ENCODE measurements at regions of chr19 and their contacts with region 1.

Region 1: DNA sequence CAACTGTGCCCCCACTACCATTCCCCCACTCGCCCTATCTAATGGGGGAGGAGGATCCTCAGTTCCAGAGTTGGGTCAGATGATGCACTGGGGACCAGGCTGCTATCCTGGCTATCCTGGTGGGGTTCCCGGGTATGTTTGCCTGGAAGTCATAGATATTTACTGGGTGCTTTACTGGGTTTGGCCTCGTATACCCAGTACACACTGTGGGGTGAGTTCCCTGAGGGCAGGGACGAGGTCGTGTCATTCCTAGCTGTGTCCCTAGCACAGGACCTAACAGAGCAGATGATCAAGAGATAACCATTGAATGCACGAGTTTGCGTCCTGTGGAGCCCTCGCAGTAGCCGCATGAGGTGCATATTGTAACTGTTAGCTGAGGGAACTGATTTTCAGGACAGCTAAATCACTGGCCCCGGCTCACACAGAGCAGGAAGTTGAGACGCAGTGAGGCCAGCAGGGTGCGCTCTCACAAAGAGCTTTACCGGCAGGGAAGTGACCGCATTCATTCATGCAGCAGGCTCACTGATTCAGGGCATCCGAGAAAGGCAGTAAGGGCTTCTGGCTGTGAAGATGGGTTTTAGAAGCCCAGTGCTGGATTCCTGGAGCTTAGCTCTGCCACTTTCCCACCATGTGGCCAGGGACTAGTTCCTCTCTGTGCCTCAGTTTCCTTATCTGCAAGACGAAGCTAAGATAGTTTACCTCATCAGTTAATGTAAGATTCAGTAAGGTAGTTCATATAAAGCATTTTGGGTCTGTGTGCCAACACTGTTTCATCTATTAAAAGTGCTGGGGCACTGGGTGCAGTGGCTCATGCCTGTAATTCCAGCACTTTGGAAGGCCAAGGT is 6.0 kb downstream of the RUVBL2 start:
- DNase-seq: peak; percentile 52
- H3K4me3 ChIP-seq: no peak overlapping the region
- H3K27ac ChIP-seq: no peak overlapping the region
- H3K4me1 ChIP-seq: peaks cover 3% of the 10 kb centered on the region
- H3K27me3 ChIP-seq: no peaks in the 10 kb centered on the region
- CTCF ChIP-seq: peak; percentile 79 to 84

Region 2: DNA sequence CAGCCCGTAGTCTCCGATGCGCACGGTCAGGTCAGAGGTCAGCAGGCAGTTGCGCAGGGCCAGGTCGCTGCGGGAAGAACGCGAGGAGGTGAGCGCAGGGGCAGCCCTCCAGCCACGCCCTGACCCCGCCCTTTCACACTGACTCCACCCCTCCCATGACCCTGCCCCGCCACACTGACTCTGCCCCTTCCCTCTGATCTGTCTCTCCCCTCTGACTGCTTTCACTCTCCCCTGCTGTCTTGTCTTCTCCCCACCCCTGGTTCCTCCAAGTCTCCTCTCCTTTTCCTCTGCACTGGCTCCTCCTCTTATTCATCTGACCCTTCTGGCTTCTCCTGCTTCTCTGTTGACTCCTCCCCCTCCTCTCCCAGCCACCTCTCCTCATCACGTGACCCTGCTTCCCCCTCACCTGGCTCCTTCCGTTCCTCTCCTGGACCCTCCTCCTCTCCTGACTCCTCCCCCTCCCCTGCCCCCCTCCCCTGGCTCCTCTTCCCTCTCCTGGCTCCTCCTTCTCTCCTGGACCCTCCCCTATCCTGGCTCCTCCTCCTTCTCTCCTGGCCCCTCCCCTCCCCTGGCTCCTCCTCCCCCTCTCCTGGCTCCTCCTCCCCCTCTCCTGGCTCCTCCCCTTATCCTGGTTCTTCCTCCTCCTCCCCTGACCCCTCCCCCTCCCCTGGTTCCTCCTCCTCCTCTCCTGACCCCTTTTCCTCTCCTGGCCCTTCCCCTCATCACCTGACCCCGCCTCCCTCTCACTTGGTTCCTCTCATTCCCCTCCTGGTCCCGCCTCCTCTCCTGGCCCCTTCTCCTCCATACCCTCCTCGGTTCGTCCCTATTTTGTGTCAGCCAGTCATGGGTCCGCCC is 498.0 kb before region 1 on chr19:
- CTCF ChIA-PET with region 1: interaction called, 21 read pairs
- dilution Hi-C with region 1: no loop called
- in situ Hi-C with region 1: no loop called
- intact Hi-C with region 1: no loop called
- DNase-seq: peak; percentile 97
- H3K4me3 ChIP-seq: peak overlapping the region; percentile 28 to 54 (median 47)
- H3K27ac ChIP-seq: no peak overlapping the region
- H3K4me1 ChIP-seq: peaks cover 13% of the 10 kb centered on the region
- H3K27me3 ChIP-seq: peaks cover 7% of the 10 kb centered on the region
- CTCF ChIP-seq: no peak

Region 3: DNA sequence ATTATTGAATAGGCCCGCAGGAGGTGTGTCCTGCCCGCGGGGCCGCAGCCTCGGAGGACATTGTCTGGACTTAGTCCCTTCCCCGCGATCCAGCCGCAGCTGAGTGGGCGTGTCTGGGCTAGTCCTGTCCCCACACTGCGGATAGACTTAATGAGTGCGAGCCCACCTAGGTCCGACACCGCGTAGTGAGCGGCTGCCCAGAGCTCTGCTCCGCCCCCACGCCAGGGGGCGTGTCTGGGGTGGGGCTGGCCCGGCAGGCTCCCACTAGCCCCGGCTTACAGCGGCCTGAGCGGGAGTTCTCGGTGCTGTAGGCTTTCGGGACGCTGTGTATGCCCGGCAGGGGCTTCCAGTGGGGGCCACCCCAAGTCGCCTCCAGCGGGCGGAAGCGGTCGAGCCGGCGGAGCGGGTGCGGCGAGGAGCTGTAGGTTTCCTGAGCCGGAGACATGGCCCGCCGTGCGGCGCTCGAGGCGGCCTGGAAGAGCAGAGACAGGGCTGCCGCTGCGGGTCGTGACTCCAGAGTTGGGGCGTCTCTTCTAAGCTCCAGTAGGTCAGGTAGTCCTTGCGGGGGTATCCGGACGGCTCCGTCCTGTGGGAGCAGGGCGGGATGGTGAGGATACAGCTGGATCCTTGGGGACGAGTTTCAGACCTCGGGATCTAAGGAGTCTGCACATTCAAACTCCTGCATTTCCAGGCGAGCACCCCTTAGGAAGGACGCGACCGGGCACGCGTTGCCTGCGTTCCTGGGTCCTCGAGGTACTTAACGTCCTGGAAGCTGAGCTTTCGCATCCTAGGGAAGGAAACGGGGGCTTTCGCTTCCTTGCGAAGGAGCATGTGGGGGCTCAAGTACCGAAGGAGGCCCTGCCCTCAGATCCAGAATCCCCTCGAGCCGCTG is 56.6 kb after region 1 on chr19:
- CTCF ChIA-PET with region 1: no interaction called
- dilution Hi-C with region 1: loop called (anchors 5 kb)
- in situ Hi-C with region 1: no loop called
- intact Hi-C with region 1: loop called (anchors 5 kb)
- DNase-seq: peak; percentile 69
- H3K4me3 ChIP-seq: peak overlapping the region; percentile 57 to 83 (median 69)
- H3K27ac ChIP-seq: peak overlapping the region; percentile 52
- H3K4me1 ChIP-seq: peaks cover 20% of the 10 kb centered on the region
- H3K27me3 ChIP-seq: no peaks in the 10 kb centered on the region
- CTCF ChIP-seq: peak in 1 of 2 donors; percentile 37

Region 4: GRCh38 chr19:49073514-49074378 is 74.0 kb after region 1 on chr19:
- CTCF ChIA-PET with region 1: interaction called, 12 read pairs
- dilution Hi-C with region 1: no loop called
- in situ Hi-C with region 1: no loop called
- intact Hi-C with region 1: loop called (anchors 1 kb)
- DNase-seq: peak; percentile 57
- H3K4me3 ChIP-seq: peak overlapping the region in 1 of 3 experiments; percentile 14
- H3K27ac ChIP-seq: no peak overlapping the region
- H3K4me1 ChIP-seq: peaks cover 13% of the 10 kb centered on the region
- H3K27me3 ChIP-seq: peaks cover 18% of the 10 kb centered on the region
- CTCF ChIP-seq: peak; percentile 26 to 49

Region 5: DNA sequence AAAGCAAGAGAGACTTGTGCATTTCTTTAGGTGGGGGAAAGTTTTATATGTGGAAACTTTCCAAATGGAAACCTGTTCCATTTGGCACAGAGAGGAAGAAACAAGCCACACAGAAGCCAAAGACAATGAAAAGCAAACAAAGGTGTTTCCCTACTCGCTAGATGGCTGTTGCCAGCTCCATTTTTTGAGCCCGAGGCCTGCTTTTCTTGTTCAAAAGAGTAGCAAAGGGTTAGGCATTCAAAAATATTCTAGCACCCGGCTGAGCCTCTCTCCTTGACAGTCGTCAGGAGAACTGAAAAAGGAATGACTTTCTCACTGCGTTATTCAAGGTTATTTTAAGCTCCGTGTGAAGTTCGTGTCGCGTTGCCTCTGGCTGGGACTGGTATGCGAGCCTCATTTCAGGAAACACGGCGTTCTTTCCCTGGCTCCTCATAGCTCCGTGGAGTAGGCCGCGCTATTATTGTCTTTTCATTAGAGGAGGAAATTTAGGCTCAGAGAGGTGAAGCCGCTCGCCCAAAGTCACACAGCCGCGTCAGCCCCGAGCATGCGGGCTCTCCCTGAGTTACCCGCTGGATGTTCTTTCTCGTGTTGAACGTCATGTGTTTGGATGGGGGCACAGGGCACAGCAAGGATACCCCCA is 165.5 kb after region 1 on chr19:
- CTCF ChIA-PET with region 1: no interaction called
- dilution Hi-C with region 1: no loop called
- in situ Hi-C with region 1: no loop called
- intact Hi-C with region 1: no loop called
- DNase-seq: no peak
- H3K4me3 ChIP-seq: no peak overlapping the region
- H3K27ac ChIP-seq: no peak overlapping the region
- H3K4me1 ChIP-seq: no peaks in the 10 kb centered on the region
- H3K27me3 ChIP-seq: no peaks in the 10 kb centered on the region
- CTCF ChIP-seq: no peak

Region 6: DNA sequence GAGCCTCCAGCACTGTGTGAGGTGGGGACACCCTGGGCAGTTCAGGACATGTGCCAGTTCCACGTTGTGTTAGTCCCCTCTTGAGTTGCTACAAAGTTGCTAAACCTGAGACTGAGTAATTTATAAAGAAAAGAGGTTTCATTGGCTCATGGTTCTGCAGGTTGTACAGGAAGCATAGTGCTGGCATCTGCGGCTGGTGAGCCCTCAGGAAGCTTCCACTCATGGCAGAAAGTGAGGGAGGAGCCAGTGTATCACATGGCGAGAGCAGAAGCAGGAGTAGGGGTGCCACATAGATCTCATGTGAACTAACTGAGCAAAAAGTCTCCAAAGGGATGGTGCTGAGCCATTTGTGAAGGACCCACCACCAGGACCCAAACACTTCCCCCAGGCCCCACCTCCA is 191.1 kb after region 1 on chr19:
- CTCF ChIA-PET with region 1: no interaction called
- dilution Hi-C with region 1: loop called (anchors 5 kb)
- in situ Hi-C with region 1: loop called in 1 of 2 experiments (anchors 10 kb)
- intact Hi-C with region 1: no loop called
- DNase-seq: no peak
- H3K4me3 ChIP-seq: no peak overlapping the region
- H3K27ac ChIP-seq: no peak overlapping the region
- H3K4me1 ChIP-seq: no peaks in the 10 kb centered on the region
- H3K27me3 ChIP-seq: no peaks in the 10 kb centered on the region
- CTCF ChIP-seq: no peak

Region 7: DNA sequence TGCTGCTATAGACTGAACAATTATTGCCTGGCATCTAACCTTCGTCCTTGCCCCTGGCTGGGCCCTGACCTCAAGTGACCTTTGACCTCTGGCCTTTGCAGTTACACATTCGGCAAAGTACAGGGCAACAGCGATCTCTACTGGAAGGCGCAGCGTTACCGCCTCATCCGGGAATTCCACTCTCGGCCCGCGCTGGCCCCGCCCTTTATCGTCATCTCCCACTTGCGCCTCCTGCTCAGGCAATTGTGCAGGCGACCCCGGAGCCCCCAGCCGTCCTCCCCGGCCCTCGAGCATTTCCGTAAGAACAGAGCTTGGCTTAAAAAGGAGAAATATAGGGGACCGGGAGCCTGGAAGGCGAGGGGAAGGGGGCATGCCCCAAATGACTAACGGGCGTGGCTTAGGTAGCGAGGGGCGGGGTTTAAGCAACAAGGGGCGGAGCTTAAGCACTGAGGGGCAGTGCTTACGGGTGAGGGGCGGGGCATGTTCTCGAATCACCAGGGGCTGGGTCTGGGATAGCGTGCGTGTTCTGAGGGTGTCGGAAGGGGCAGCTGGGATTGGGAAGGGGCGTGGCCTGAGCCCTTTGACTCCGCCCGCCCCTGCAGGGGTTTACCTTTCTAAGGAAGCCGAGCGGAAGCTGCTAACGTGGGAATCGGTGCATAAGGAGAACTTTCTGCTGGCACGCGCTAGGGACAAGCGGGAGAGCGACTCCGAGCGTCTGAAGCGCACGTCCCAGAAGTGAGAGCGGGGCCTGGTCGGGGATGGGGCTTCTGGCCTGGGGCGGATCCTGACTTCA is 210.6 kb after region 1 on chr19:
- CTCF ChIA-PET with region 1: interaction called, 5 read pairs
- dilution Hi-C with region 1: no loop called
- in situ Hi-C with region 1: no loop called
- intact Hi-C with region 1: loop called (anchors 2 kb)
- DNase-seq: no peak
- H3K4me3 ChIP-seq: no peak overlapping the region
- H3K27ac ChIP-seq: no peak overlapping the region
- H3K4me1 ChIP-seq: no peaks in the 10 kb centered on the region
- H3K27me3 ChIP-seq: no peaks in the 10 kb centered on the region
- CTCF ChIP-seq: no peak